MCF 10A (cell line): ENCODE measurements at regions of chrX and their contacts with region 1.

Region 1: GRCh38 chrX:122512561-122513072 is 671.5 kb upstream of the GRIA3 start:
- DNase-seq: no peak
- H3K4me3 Mint-ChIP-seq: no peak overlapping the region
- H3K27ac Mint-ChIP-seq: no peak overlapping the region
- H3K4me1 Mint-ChIP-seq: no peaks in the 10 kb centered on the region
- H3K27me3 Mint-ChIP-seq: no peaks in the 10 kb centered on the region
- CTCF ChIP-seq: no peak

Region 2: GRCh38 chrX:122434942-122435341 is 77.7 kb before region 1 on chrX:
- CTCF ChIA-PET with region 1: no interaction called
- POLR2A ChIA-PET with region 1: no interaction called
- intact Hi-C with region 1: loop called (anchors 2 kb)
- DNase-seq: no peak
- H3K4me3 Mint-ChIP-seq: no peak overlapping the region
- H3K27ac Mint-ChIP-seq: no peak overlapping the region
- H3K4me1 Mint-ChIP-seq: no peaks in the 10 kb centered on the region
- H3K27me3 Mint-ChIP-seq: no peaks in the 10 kb centered on the region
- CTCF ChIP-seq: no peak